ENCODE measurements at regions of chr10 and their contacts with region 1.

Region 1: GRCh38 chr10:23438550-23439441 is at the start of gene OTUD1:
- DNase-seq: peak; percentile 78
- ATAC-seq: peak; percentile 88
- H3K4me3 ChIP-seq: peak within 1 kb of the TSS; percentile 75 to 82 (median 78)
- H3K27ac ChIP-seq: no peak within 1 kb of the TSS
- H3K4me1 ChIP-seq: peaks cover 20% of the 10 kb centered on the region
- H3K27me3 ChIP-seq: no peaks in the 10 kb centered on the region
- CTCF ChIP-seq: no peak
- EP300 ChIP-seq: 0 out of 4 replicates have a peak, but pooled peaks of 1 of the 2 experiments have one; percentile 7
- POLR2A ChIP-seq: peak in 1 of 2 experiments; percentile 16; a peak in 1 of 4 replicates
- RAD21 ChIP-seq: 0 out of 2 replicates have a peak, but pooled peaks have one; percentile 24
- total RNA-seq, gene OTUD1: 1.2 and 1.3 TPM in 2 replicates

Region 2: DNA sequence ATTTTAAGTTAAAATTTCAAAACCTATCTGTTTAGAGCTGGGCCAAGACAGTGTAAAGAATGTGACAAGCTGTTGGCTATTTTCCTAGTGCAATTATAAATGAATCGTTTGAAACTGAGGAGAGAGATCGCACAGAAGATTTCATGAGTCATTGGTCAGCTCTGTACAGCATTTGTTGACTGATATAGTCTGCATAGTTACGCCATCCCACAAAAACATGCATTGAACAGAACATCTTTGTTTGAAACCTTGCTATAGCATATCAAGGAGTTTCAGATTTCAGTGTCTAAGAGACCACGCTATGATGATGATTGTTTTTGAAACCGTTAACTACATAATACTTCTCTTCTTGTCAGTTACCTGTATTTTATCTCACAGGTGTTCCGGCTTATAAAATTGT is 92.9 kb before region 1 on chr10:
- CTCF ChIA-PET with region 1: no interaction called
- POLR2A ChIA-PET with region 1: no interaction called
- in situ Hi-C with region 1: no loop called
- intact Hi-C with region 1: loop called (anchors 5 kb)
- DNase-seq: peak; percentile 94
- ATAC-seq: peak; percentile 92
- H3K4me3 ChIP-seq: peak overlapping the region in 1 of 3 experiments; percentile 9; a peak in 1 of 6 replicates
- H3K27ac ChIP-seq: peak overlapping the region; percentile 40
- H3K4me1 ChIP-seq: peaks cover 35% of the 10 kb centered on the region
- H3K27me3 ChIP-seq: peaks cover 2 to 6% of the 10 kb centered on the region in 2 experiments; a peak in 2 of 5 replicates
- CTCF ChIP-seq: no peak
- EP300 ChIP-seq: peak; percentile 19 to 61; a peak in 2 of 4 replicates
- POLR2A ChIP-seq: no peak
- RAD21 ChIP-seq: no peak

Region 3: GRCh38 chr10:23479798-23480473 is 41.1 kb after region 1 on chr10:
- CTCF ChIA-PET with region 1: no interaction called
- POLR2A ChIA-PET with region 1: no interaction called
- in situ Hi-C with region 1: no loop called
- intact Hi-C with region 1: no loop called
- DNase-seq: no peak
- ATAC-seq: no peak
- H3K4me3 ChIP-seq: no peak overlapping the region
- H3K27ac ChIP-seq: no peak overlapping the region
- H3K4me1 ChIP-seq: no peaks in the 10 kb centered on the region
- H3K27me3 ChIP-seq: no peaks in the 10 kb centered on the region
- CTCF ChIP-seq: no peak
- EP300 ChIP-seq: no peak
- POLR2A ChIP-seq: no peak
- RAD21 ChIP-seq: no peak